ENCODE measurements at regions of chr2 and their contacts with region 1.

Region 1: GRCh38 chr2:44377486-44377885 is 15.7 kb downstream of the CAMKMT start:
- DNase-seq: no peak
- ATAC-seq: no peak
- H3K4me3 ChIP-seq: no peak overlapping the region
- H3K27ac ChIP-seq: no peak overlapping the region
- H3K4me1 ChIP-seq: no peaks in the 10 kb centered on the region
- CTCF ChIP-seq: no peak
- EP300 ChIP-seq: no peak
- POLR2A ChIP-seq: no peak
- RAD21 ChIP-seq: no peak

Region 2: GRCh38 chr2:44392338-44392943 is 15.0 kb after region 1 on chr2:
- CTCF ChIA-PET with region 1: interaction called, 39 read pairs
- POLR2A ChIA-PET with region 1: no interaction called
- DNase-seq: peak; percentile 21 to 35
- ATAC-seq: no peak
- H3K4me3 ChIP-seq: no peak overlapping the region
- H3K27ac ChIP-seq: no peak overlapping the region
- H3K4me1 ChIP-seq: no peaks in the 10 kb centered on the region
- CTCF ChIP-seq: peak; percentile 95
- EP300 ChIP-seq: no peak
- POLR2A ChIP-seq: no peak
- RAD21 ChIP-seq: peak; percentile 75 to 82

Measured in A549 (cell line).